Endothelial cell of umbilical vein (primary cell): ENCODE measurements at regions of chr7 and their contacts with region 1.

Region 1: DNA sequence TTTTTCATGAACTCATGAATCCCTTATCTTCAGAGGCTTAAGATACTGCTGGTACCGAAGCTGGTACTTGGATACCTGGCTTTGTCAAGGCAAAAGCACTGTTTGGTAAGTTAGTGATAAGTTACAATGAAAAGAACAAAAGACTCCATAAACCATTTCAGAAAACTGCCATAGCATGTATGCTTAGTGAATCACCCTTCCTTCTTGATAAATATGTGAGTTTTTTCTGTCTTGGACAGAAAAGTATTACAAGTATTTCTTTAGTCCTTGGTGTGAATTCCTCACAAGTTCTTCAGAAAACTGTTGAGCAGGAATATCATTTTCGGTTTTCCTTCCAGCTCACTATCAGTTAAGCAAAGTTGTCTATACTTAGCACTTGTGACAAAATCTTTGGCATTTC is 25.6 kb downstream of the PUS7 start:
- DNase-seq: peak; percentile 90
- H3K4me3 ChIP-seq: peak overlapping the region in 1 of 3 experiments; percentile 40
- H3K27ac ChIP-seq: peak overlapping the region; percentile 91
- H3K4me1 ChIP-seq: peaks cover 38% of the 10 kb centered on the region
- H3K27me3 ChIP-seq: no peaks in the 10 kb centered on the region
- CTCF ChIP-seq: no peak
- POLR2A ChIP-seq: no peak

Region 2: GRCh38 chr7:105521533-105522061 is 25.1 kb after region 1 on chr7:
- CTCF ChIA-PET with region 1: interaction called, 3 read pairs
- POLR2A ChIA-PET with region 1: no interaction called
- dilution Hi-C with region 1: no loop called
- intact Hi-C with region 1: loop called (anchors 2 kb)
- DNase-seq: peak; percentile 71
- H3K4me3 ChIP-seq: peak overlapping the region; percentile 55 to 79 (median 59)
- H3K27ac ChIP-seq: peak overlapping the region; percentile 70
- H3K4me1 ChIP-seq: peaks cover 7% of the 10 kb centered on the region
- H3K27me3 ChIP-seq: no peaks in the 10 kb centered on the region
- CTCF ChIP-seq: no peak
- POLR2A ChIP-seq: no peak